GM12878 (cell line): ENCODE measurements at regions of chrX and their contacts with region 1.

Region 1: GRCh38 chrX:1453951-1454785 is 1.5 kb upstream of the ASMTL start:
- DNase-seq: no peak
- ATAC-seq: peak; percentile 70
- H3K4me3 ChIP-seq: peak overlapping the region; percentile 32; the same call in 1 of the 2 replicates
- H3K27ac ChIP-seq: peak overlapping the region; percentile 42
- H3K4me1 ChIP-seq: peaks cover 4% of the 10 kb centered on the region
- H3K27me3 ChIP-seq: no peaks in the 10 kb centered on the region
- CTCF ChIP-seq: peak; percentile 92 to 98 (median 98); a peak in 5 of 6 replicates
- EP300 ChIP-seq: no peak
- POLR2A ChIP-seq: no peak
- RAD21 ChIP-seq: peak; percentile 95

Region 2: GRCh38 chrX:318739-319578 is 1135.2 kb before region 1 on chrX and contains the start of gene GTPBP6:
- CTCF ChIA-PET with region 1: no interaction called
- POLR2A ChIA-PET with region 1: no interaction called
- RAD21 ChIA-PET with region 1: no interaction called
- SMC1A ChIA-PET with region 1: no interaction called
- in situ Hi-C with region 1: no loop called
- intact Hi-C with region 1: loop called (anchors 5 kb)
- DNase-seq: peak; percentile 99
- ATAC-seq: peak; percentile 84
- H3K4me3 ChIP-seq: peak within 1 kb of the TSS; percentile 86
- H3K27ac ChIP-seq: peak within 1 kb of the TSS; percentile 95
- H3K4me1 ChIP-seq: peaks cover 7% of the 10 kb centered on the region
- H3K27me3 ChIP-seq: no peaks in the 10 kb centered on the region
- CTCF ChIP-seq: peak in 1 of 3 experiments; percentile 35; a peak in 2 of 6 replicates
- EP300 ChIP-seq: no peak
- POLR2A ChIP-seq: peak; percentile 85
- RAD21 ChIP-seq: no peak
- polyA plus RNA-seq, gene GTPBP6: 0.31 to 1.9 TPM

Region 3: GRCh38 chrX:1391707-1392375 is 62.3 kb before region 1 on chrX and contains the start of gene SLC25A6:
- CTCF ChIA-PET with region 1: no interaction called
- POLR2A ChIA-PET with region 1: no interaction called
- RAD21 ChIA-PET with region 1: no interaction called
- SMC1A ChIA-PET with region 1: no interaction called
- in situ Hi-C with region 1: no loop called
- intact Hi-C with region 1: loop called (anchors 1 kb)
- DNase-seq: peak; percentile 88
- ATAC-seq: peak; percentile 95
- H3K4me3 ChIP-seq: peak within 1 kb of the TSS; percentile 94
- H3K27ac ChIP-seq: peak within 1 kb of the TSS; percentile 99
- H3K4me1 ChIP-seq: peaks cover 10% of the 10 kb centered on the region
- H3K27me3 ChIP-seq: no peaks in the 10 kb centered on the region
- CTCF ChIP-seq: 0 out of 6 replicates have a peak, but pooled peaks of 1 of the 3 experiments have one; percentile 10
- EP300 ChIP-seq: no peak
- POLR2A ChIP-seq: peak; percentile 97
- RAD21 ChIP-seq: no peak
- polyA plus RNA-seq, gene SLC25A6: 61.9 to 127 TPM

Region 4: GRCh38 chrX:1580735-1581531 is 126.8 kb after region 1 on chrX:
- CTCF ChIA-PET with region 1: no interaction called
- POLR2A ChIA-PET with region 1: no interaction called
- RAD21 ChIA-PET with region 1: no interaction called
- SMC1A ChIA-PET with region 1: no interaction called
- in situ Hi-C with region 1: loop called (anchors 5 kb)
- intact Hi-C with region 1: loop called (anchors 1 kb)
- DNase-seq: no peak
- ATAC-seq: peak; percentile 67
- H3K4me3 ChIP-seq: no peak overlapping the region
- H3K27ac ChIP-seq: no peak overlapping the region
- H3K4me1 ChIP-seq: peaks cover 16% of the 10 kb centered on the region
- H3K27me3 ChIP-seq: no peaks in the 10 kb centered on the region
- CTCF ChIP-seq: peak; percentile 64 to 82 (median 81)
- EP300 ChIP-seq: no peak
- POLR2A ChIP-seq: no peak
- RAD21 ChIP-seq: peak; percentile 71

Region 5: DNA sequence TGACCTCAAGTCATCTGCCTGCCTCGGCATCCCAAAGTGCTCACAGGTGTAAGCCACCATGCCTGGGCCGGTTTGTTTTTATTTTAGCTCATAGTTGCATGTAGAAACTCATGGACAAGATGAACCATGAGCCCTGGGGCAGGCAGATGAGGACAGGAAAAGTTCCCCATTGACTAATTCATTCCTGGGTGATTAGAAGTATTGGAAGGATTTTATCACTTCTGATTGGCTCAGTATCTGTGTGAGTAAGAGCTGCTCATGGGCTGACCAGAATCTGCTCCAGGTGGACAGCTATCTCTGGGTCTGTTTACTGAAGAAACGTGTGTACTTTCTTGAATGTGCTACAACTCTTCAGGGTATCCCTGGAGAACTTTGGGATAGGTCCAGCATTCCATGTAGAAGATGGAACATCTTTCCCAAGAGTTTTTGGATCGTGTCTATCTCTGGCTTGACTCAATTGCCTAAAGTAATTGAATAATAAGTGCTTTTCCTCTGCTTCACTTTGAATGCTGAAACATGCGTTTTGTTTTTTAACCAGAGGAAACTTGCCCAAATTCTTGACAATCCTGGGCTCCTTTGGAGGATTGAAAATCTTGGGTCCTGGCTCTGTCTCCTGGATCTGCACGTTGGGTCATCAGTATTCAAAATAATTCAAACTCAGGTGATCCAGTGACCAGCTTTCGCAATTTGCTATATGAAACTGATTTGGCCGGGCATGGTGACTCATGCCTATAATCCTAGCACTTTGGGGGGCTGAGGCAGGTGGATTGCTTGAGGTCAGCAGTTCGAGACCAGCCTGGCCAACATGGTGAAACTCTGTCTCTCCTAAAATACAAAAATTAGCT is 1135.2 kb after region 1 on chrX:
- CTCF ChIA-PET with region 1: no interaction called
- POLR2A ChIA-PET with region 1: no interaction called
- RAD21 ChIA-PET with region 1: no interaction called
- SMC1A ChIA-PET with region 1: no interaction called
- in situ Hi-C with region 1: no loop called
- intact Hi-C with region 1: loop called (anchors 5 kb)
- DNase-seq: no peak
- ATAC-seq: no peak
- H3K4me3 ChIP-seq: no peak overlapping the region
- H3K27ac ChIP-seq: no peak overlapping the region
- H3K4me1 ChIP-seq: no peaks in the 10 kb centered on the region
- H3K27me3 ChIP-seq: peaks cover 2 to 7% of the 10 kb centered on the region in 2 experiments; a peak in 3 of 4 replicates
- CTCF ChIP-seq: no peak
- EP300 ChIP-seq: no peak
- POLR2A ChIP-seq: no peak
- RAD21 ChIP-seq: no peak

Region 6: DNA sequence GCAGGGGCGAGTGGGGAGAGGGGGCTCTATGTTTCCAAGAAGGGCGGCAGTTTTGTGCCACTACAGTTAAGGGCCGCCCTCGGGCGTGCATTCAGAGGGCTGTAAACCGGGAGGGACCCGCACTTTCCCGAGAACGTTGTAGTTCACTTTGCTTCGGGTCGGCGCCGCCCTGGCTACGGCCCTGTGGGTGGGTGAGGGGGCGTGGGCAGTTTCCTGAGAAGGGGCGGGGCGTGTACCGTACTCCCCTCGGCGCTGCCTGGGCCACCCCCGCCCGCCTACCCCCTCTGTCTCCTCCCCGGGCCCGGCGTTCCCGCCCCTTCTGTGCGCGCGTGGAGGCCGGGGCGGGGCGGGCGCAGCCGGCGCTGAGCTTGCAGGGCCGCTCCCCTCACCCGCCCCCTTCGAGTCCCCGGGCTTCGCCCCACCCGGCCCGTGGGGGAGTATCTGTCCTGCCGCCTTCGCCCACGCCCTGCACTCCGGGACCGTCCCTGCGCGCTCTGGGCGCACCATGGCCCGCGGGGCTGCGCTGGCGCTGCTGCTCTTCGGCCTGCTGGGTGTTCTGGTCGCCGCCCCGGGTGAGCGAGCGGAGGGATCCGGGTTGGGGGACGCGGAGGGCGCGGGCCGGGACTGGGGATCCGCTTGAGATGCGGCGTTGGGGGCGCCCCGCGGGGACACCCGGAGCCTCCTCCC is 1236.8 kb after region 1 on chrX and contains the start of gene CD99:
- CTCF ChIA-PET with region 1: no interaction called
- POLR2A ChIA-PET with region 1: no interaction called
- RAD21 ChIA-PET with region 1: no interaction called
- SMC1A ChIA-PET with region 1: no interaction called
- in situ Hi-C with region 1: no loop called
- intact Hi-C with region 1: loop called (anchors 10 kb)
- DNase-seq: peak; percentile 46
- ATAC-seq: peak; percentile 94
- H3K4me3 ChIP-seq: peak within 1 kb of the TSS; percentile 91
- H3K27ac ChIP-seq: peak within 1 kb of the TSS; percentile 65
- H3K4me1 ChIP-seq: peaks cover under 1% of the 10 kb centered on the region; the same call in 1 of the 2 replicates
- H3K27me3 ChIP-seq: no peaks in the 10 kb centered on the region
- CTCF ChIP-seq: no peak
- EP300 ChIP-seq: no peak
- POLR2A ChIP-seq: peak; percentile 81
- RAD21 ChIP-seq: no peak
- polyA plus RNA-seq, gene CD99: 24.8 to 52.1 TPM